ENCODE measurements at regions of chr20 and their contacts with region 1.

Region 1: DNA sequence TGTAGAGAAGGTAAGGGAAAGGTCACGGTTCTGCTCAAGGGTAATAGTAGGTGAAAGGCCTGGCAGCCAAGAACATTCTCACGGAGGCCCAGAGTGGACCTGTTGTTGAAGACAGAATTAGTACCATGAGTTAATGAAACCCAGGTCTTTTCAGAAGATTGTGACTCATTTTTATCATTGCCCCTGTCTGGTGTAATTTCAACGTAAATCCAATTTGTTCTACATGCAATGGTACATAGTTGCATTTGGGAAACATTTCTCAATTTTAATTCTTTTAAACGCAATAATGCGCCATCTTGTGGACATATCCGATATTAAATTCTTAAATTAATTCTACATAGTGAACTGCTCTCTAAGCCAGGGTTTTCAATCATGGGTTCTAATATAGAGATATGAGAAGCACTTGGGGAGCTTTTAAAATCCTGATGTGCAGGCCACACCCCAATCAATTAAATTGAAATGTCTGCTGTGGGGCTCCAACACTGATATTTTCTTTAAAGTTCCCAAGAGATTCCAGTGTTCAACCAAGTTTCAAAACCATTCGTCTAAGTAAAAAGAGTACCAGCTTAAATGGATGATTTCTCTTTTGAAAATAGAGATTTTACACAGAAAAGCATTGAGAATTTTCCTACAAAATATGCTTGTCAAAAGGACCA is 257.4 kb downstream of the PLCB1 start:
- DNase-seq: peak; percentile 23
- ATAC-seq: peak; percentile 55
- H3K4me3 ChIP-seq: no peak overlapping the region
- H3K27ac ChIP-seq: no peak overlapping the region
- H3K4me1 ChIP-seq: no peaks in the 10 kb centered on the region
- H3K27me3 ChIP-seq: no peaks in the 10 kb centered on the region
- CTCF ChIP-seq: peak in 2 of 3 experiments; percentile 33 to 64; a peak in 3 of 6 replicates
- POLR2A ChIP-seq: no peak
- RAD21 ChIP-seq: peak; percentile 37

Region 2: GRCh38 chr20:8043687-8044282 is 345.7 kb before region 1 on chr20:
- CTCF ChIA-PET with region 1: interaction called, 9 read pairs
- POLR2A ChIA-PET with region 1: no interaction called
- RAD21 ChIA-PET with region 1: no interaction called
- intact Hi-C with region 1: loop called (anchors 1 kb)
- DNase-seq: peak; percentile 60
- ATAC-seq: peak; percentile 91
- H3K4me3 ChIP-seq: no peak overlapping the region
- H3K27ac ChIP-seq: no peak overlapping the region
- H3K4me1 ChIP-seq: no peaks in the 10 kb centered on the region; a peak in 1 of 4 replicates
- H3K27me3 ChIP-seq: no peaks in the 10 kb centered on the region
- CTCF ChIP-seq: peak; percentile 46 to 61 (median 55); a peak in 5 of 6 replicates
- POLR2A ChIP-seq: no peak
- RAD21 ChIP-seq: peak; percentile 69

Region 3: DNA sequence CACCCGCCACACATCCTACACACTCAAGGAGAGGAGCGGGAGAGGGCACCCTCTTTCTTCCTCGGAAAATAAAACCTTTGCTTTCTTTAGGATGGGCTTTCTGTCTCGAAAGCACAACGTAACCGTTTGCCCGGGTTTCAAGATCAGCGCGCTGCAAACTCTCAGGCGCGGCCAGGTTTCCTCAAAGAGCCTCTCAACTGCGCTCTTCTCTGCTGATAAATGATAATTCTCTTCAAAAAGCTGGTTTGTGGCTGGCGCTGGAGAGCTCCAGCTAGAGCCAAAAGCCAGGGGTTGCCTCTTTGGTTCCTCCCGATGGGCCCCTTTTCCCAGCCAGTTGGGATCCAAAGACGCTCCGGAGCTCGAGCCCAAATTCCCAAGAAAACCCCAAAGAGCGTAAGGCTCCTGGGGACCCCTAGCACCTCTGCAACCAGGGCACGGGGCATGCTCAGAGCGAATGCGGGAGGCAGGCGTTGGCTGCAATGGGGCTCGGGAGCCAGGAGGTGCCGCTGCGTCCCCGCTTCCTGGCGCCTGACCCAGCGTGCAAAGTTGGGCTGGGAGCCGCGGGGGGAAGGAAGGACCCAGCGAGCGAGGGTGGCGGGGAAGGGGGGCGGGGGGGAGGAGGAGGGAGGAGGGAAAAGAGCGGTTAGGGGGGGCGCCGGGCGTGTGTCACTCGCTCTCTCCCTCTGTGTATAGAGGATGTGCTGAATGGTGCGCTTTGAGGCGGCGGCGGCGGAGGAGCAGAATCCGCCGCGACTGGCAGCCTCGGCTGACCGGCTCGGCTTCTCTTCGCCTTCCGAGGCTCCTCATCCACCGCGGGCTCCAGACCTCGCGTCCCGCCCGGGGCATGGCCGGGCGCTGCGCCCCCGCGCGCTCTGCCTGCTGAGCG is 257.7 kb before region 1 on chr20 and contains the start of gene PLCB1:
- CTCF ChIA-PET with region 1: no interaction called
- POLR2A ChIA-PET with region 1: no interaction called
- RAD21 ChIA-PET with region 1: no interaction called
- intact Hi-C with region 1: loop called (anchors 2 kb)
- DNase-seq: peak; percentile 13
- ATAC-seq: peak; percentile 99
- H3K4me3 ChIP-seq: peak within 1 kb of the TSS; percentile 33 to 53
- H3K27ac ChIP-seq: no peak within 1 kb of the TSS
- H3K4me1 ChIP-seq: peaks cover 0 to 5% of the 10 kb centered on the region in 2 experiments; a peak in 2 of 4 replicates
- H3K27me3 ChIP-seq: no peaks in the 10 kb centered on the region
- CTCF ChIP-seq: peak; percentile 45 to 78 (median 59); a peak in 4 of 6 replicates
- POLR2A ChIP-seq: no peak
- RAD21 ChIP-seq: peak; percentile 75
- total RNA-seq, gene PLCB1: 15.8 TPM

Region 4: DNA sequence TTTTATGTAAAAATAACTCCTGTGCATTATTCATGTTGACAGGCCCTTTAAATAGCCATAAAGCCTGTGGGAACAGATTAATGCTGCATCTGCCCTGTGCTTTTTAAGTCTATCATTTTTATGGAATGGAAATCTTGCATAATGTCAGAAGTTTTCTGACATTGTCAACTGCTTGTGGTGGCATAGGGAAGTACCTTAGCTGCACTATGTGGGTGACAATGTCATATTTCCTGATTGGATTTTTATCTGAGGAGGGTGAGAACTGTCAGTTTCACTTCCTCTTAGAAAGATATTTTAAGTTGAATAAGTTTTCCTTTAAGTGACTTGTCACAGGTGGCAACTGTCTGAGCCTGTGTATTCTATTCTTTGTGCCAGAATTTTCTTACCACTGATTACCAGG is 10.4 kb after region 1 on chr20:
- CTCF ChIA-PET with region 1: interaction called, 11 read pairs
- POLR2A ChIA-PET with region 1: no interaction called
- RAD21 ChIA-PET with region 1: no interaction called
- intact Hi-C with region 1: no loop called
- DNase-seq: no peak
- ATAC-seq: no peak
- H3K4me3 ChIP-seq: no peak overlapping the region
- H3K27ac ChIP-seq: no peak overlapping the region
- H3K4me1 ChIP-seq: no peaks in the 10 kb centered on the region
- H3K27me3 ChIP-seq: no peaks in the 10 kb centered on the region
- CTCF ChIP-seq: no peak
- POLR2A ChIP-seq: no peak
- RAD21 ChIP-seq: no peak

Measured in HCT116 (cell line).